Activated B cell treated with CpG ODN at 0.5 μM for 24 hours (primary cell): ENCODE measurements at regions of chr20 and their contacts with region 1.

Region 1: GRCh38 chr20:17536944-17537444 is 5.8 kb upstream of the BFSP1 start:
- DNase-seq: peak; percentile 30
- ATAC-seq: peak; percentile 92
- H3K4me3 Mint-ChIP-seq: no peak overlapping the region
- H3K27ac Mint-ChIP-seq: no peak overlapping the region
- H3K4me1 Mint-ChIP-seq: peaks cover 5% of the 10 kb centered on the region
- H3K27me3 Mint-ChIP-seq: peaks cover 26% of the 10 kb centered on the region
- CTCF ChIP-seq: no peak

Region 2: DNA sequence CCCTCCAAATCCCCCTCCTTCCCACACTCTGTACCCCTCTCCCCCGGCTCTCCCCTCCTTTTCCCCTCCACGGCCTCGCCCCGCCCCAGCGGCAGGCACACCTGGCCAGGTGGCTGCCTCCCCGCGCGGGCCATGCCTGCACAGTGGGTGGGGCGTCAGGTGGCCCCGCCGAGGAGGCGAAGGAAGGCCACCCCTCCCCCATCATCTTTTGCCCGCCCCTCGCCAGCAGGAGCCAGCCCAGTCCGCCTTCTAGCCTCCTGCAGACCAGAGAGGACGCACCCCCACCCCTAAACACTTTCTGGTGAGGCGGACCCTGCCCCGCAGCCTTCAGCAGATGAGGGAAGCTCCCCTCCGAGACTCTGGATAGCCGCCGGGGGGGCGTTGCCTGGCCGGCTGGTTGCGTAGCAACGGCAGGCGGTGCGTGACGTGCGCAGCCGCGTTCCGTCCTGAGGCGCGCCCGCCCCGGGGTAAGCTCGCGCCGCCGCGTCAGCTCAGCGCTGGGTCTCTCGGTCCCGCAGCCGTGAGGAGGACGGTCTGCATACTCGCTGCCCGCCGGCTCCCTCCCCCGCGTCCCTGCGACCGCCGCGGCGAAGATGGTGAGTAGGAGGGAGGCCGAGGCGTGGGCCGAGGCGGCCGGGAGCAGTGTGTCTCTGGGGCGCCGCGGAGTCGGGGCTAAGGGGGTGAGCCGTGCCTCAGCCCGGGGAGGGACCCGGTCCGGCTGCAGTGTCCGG is 32.8 kb after region 1 on chr20 and contains the start of gene DSTN:
- CTCF ChIA-PET with region 1: interaction called, 5 read pairs
- POLR2A ChIA-PET with region 1: no interaction called
- intact Hi-C with region 1: loop called (anchors 1 kb)
- DNase-seq: peak; percentile 88
- ATAC-seq: peak; percentile 89
- H3K4me3 Mint-ChIP-seq: peak within 1 kb of the TSS; percentile 93
- H3K27ac Mint-ChIP-seq: peak within 1 kb of the TSS; percentile 85
- H3K4me1 Mint-ChIP-seq: peaks cover 16% of the 10 kb centered on the region
- H3K27me3 Mint-ChIP-seq: peaks cover 2% of the 10 kb centered on the region
- CTCF ChIP-seq: no peak
- total RNA-seq, gene DSTN: 14.4 and 20.1 TPM in 2 replicates

Region 3: GRCh38 chr20:17648791-17649730 is 112.1 kb after region 1 on chr20:
- CTCF ChIA-PET with region 1: interaction called, 9 read pairs
- POLR2A ChIA-PET with region 1: no interaction called
- intact Hi-C with region 1: loop called (anchors 1 kb)
- DNase-seq: no peak
- ATAC-seq: peak; percentile 75
- H3K4me3 Mint-ChIP-seq: peak overlapping the region; percentile 15
- H3K27ac Mint-ChIP-seq: no peak overlapping the region
- H3K4me1 Mint-ChIP-seq: peaks cover 25% of the 10 kb centered on the region
- H3K27me3 Mint-ChIP-seq: no peaks in the 10 kb centered on the region
- CTCF ChIP-seq: no peak

Region 4: DNA sequence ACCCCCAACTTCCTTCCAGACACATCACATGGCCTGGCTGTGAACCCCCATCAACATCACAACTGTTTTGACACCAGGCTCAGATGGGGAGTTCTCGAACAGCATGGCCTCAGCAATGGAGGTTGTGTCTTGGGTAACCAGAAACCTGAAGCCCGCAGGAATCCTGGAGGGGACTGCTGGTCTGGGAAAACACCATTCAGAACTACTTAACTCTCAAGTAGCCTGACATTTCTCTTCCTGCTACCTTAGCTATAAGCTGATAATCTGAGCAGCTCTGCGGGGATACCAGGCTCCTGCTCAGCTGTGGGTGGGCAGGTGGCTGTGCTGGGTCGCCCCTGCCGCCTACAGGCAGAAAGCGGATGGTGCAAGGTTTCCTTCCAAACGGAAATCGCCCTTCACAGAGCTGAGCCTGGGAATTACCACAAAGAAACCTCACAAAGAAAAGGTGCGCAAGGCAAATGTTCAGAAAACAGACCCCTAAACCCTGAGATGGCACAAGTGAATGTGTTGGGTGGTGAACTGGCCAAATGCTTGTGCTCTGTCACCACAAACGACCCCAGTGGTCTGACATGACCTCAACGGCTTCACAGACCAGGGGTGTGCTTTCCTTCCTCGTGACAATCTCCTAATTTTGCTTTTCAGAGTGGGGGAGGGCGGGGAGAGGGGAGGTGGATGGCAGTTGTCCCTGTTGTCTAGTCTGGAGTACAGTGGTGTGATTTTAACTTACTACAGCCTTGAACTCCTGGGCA is 402.1 kb after region 1 on chr20:
- CTCF ChIA-PET with region 1: interaction called, 16 read pairs
- POLR2A ChIA-PET with region 1: no interaction called
- intact Hi-C with region 1: loop called (anchors 1 kb)
- DNase-seq: peak; percentile 48
- ATAC-seq: peak; percentile 88
- H3K4me3 Mint-ChIP-seq: no peak overlapping the region
- H3K27ac Mint-ChIP-seq: no peak overlapping the region
- H3K4me1 Mint-ChIP-seq: peaks cover 33% of the 10 kb centered on the region
- H3K27me3 Mint-ChIP-seq: no peaks in the 10 kb centered on the region
- CTCF ChIP-seq: peak; percentile 55

Region 5: DNA sequence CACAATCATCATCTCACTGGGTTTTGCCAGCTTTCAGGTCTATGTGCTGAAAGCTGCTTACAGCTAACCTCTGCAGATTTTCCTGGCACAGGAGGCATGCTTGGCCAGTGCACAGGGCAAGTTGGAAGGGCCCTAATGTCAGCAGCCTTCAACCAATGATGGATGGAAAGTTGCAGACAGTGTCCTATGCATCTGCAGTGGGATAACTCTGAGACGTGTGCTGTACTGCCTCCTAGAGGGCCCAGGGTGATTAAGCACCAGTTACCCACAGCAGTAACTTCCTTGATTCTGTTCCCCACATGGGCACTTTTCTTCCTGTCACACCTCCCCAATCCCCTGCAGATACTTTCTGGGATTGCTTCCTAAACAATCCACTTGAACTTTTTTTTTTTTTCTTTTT is 482.1 kb after region 1 on chr20:
- CTCF ChIA-PET with region 1: no interaction called
- POLR2A ChIA-PET with region 1: no interaction called
- intact Hi-C with region 1: loop called (anchors 1 kb)
- DNase-seq: no peak
- ATAC-seq: peak; percentile 78
- H3K4me3 Mint-ChIP-seq: no peak overlapping the region
- H3K27ac Mint-ChIP-seq: no peak overlapping the region
- H3K4me1 Mint-ChIP-seq: peaks cover 3% of the 10 kb centered on the region
- H3K27me3 Mint-ChIP-seq: no peaks in the 10 kb centered on the region
- CTCF ChIP-seq: no peak